A549 (cell line): ENCODE measurements at regions of chr5 and their contacts with region 1.

Region 1: DNA sequence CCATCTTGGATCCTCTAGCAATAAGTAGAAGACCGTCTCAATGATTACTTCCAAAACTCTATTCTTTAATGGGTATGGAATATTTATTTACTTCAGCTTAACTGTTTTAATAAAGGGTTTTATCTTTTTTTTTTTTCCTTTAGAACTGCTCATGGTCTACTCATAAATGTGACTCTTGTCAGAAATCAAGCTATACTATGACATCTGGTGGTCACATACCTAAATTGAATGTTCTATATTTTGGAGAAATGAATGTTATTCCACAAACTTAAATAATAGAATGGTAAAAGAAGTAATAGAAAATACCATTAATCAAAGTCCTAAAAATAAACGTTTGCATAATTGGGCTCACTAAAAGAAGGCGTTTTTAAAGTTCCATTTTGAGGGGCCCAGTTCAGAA is 131.2 kb upstream of the PLCXD3 start:
- DNase-seq: peak in 1 of 2 experiments; percentile 5
- ATAC-seq: no peak
- H3K4me3 ChIP-seq: no peak overlapping the region
- H3K27ac ChIP-seq: no peak overlapping the region
- H3K4me1 ChIP-seq: no peaks in the 10 kb centered on the region
- CTCF ChIP-seq: no peak
- EP300 ChIP-seq: no peak
- POLR2A ChIP-seq: no peak
- RAD21 ChIP-seq: peak; percentile 43 to 45

Region 2: DNA sequence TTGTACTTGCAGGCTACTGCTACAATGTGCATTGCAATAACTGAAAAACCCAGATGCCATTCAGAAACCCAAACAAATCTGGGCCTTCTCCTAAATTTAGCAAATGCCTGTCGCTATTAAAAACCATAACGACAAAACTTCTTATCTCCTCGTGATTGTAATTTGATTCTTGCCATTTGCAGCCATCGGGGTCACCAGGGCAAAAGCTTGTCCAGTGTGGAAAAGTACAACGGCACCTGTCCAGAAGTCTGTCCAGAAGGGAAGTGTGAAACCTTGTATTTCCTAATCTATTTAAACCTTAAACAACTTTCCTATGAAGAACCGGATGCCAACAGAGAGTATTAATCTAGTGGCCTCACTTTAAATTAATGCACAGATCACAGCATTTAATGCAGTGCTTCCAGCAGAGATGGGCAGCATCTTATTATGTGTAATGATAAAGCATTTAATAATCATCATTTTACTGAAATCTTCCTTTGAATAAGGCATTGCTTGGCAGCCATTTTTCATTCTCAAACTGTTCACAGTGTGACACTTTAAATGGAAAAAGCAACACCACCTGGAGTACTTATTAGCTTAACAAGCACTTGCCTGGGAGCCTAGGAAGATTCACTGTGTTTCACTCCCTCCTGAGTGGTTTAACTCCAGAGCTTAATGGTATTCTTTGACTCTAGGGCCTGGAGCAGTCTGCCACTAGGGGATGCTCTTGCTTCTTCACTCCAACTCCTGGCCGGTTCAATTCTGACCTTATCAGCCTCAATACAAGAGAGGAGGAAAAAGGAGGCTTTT is 737.2 kb before region 1 on chr5:
- CTCF ChIA-PET with region 1: interaction called, 18 read pairs
- POLR2A ChIA-PET with region 1: no interaction called
- DNase-seq: peak; percentile 58 to 71
- ATAC-seq: peak; percentile 93 to 99
- H3K4me3 ChIP-seq: no peak overlapping the region
- H3K27ac ChIP-seq: no peak overlapping the region
- H3K4me1 ChIP-seq: no peaks in the 10 kb centered on the region
- CTCF ChIP-seq: peak; percentile 85
- EP300 ChIP-seq: no peak
- POLR2A ChIP-seq: no peak
- RAD21 ChIP-seq: peak; percentile 88 to 96

Region 3: GRCh38 chr5:41270423-41271251 is 371.0 kb before region 1 on chr5:
- CTCF ChIA-PET with region 1: interaction called, 12 read pairs
- POLR2A ChIA-PET with region 1: no interaction called
- DNase-seq: peak; percentile 12 to 66
- ATAC-seq: peak; percentile 90 to 95
- H3K4me3 ChIP-seq: no peak overlapping the region
- H3K27ac ChIP-seq: no peak overlapping the region
- H3K4me1 ChIP-seq: no peaks in the 10 kb centered on the region
- CTCF ChIP-seq: peak; percentile 85
- EP300 ChIP-seq: no peak
- POLR2A ChIP-seq: no peak
- RAD21 ChIP-seq: peak; percentile 92 to 94

Region 4: GRCh38 chr5:41785061-41785460 is 143.4 kb after region 1 on chr5:
- CTCF ChIA-PET with region 1: no interaction called
- POLR2A ChIA-PET with region 1: no interaction called
- DNase-seq: no peak
- ATAC-seq: no peak
- H3K4me3 ChIP-seq: no peak overlapping the region
- H3K27ac ChIP-seq: no peak overlapping the region
- H3K4me1 ChIP-seq: peaks cover 23% of the 10 kb centered on the region
- CTCF ChIP-seq: no peak
- EP300 ChIP-seq: no peak
- POLR2A ChIP-seq: no peak
- RAD21 ChIP-seq: no peak